GM12878 (cell line): ENCODE measurements at regions of chr3 and their contacts with region 1.

Region 1: GRCh38 chr3:136861890-136862616 is at the start of gene NCK1:
- DNase-seq: peak; percentile 90
- ATAC-seq: peak; percentile 95
- H3K4me3 ChIP-seq: peak within 1 kb of the TSS; percentile 87
- H3K27ac ChIP-seq: peak within 1 kb of the TSS; percentile 92
- H3K4me1 ChIP-seq: 0 out of 2 replicates have a peak, but pooled peaks cover 2% of the 10 kb centered on the region
- H3K27me3 ChIP-seq: no peaks in the 10 kb centered on the region
- CTCF ChIP-seq: no peak
- EP300 ChIP-seq: peak in 1 of 2 experiments; percentile 13; a peak in 1 of 4 replicates
- POLR2A ChIP-seq: peak; percentile 98
- RAD21 ChIP-seq: no peak
- polyA plus RNA-seq, gene NCK1: 18.5 to 20.4 TPM

Region 2: GRCh38 chr3:136473716-136474326 is 388.2 kb before region 1 on chr3:
- CTCF ChIA-PET with region 1: no interaction called
- POLR2A ChIA-PET with region 1: no interaction called
- RAD21 ChIA-PET with region 1: no interaction called
- SMC1A ChIA-PET with region 1: no interaction called
- in situ Hi-C with region 1: no loop called
- intact Hi-C with region 1: no loop called
- DNase-seq: no peak
- ATAC-seq: no peak
- H3K4me3 ChIP-seq: no peak overlapping the region
- H3K27ac ChIP-seq: no peak overlapping the region
- H3K4me1 ChIP-seq: no peaks in the 10 kb centered on the region
- H3K27me3 ChIP-seq: no peaks in the 10 kb centered on the region
- CTCF ChIP-seq: no peak
- EP300 ChIP-seq: no peak
- POLR2A ChIP-seq: no peak
- RAD21 ChIP-seq: no peak

Region 3: DNA sequence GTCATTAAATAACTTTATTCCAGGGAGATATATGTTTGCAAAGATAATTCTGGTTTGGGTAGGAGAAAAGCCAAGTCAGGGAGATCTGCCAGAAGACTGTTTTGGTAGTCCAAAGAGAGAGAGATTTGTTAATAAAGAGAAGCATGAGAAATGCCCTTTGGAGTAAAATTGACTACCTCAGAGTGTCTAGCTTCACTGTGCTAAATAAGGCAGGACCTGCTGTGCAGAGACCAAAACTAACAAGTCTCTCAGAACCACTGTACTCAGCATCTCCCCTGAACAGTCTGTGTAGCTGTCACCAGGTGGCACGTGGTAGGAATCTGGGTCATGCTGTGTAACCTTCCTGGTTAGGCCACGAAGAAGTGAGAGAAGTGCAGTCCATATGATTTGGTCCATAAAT is 74.7 kb before region 1 on chr3:
- CTCF ChIA-PET with region 1: no interaction called
- POLR2A ChIA-PET with region 1: no interaction called
- RAD21 ChIA-PET with region 1: interaction called, 10 read pairs
- SMC1A ChIA-PET with region 1: interaction called, 6 read pairs
- in situ Hi-C with region 1: no loop called
- intact Hi-C with region 1: no loop called
- DNase-seq: no peak
- ATAC-seq: peak; percentile 88
- H3K4me3 ChIP-seq: no peak overlapping the region
- H3K27ac ChIP-seq: no peak overlapping the region
- H3K4me1 ChIP-seq: no peaks in the 10 kb centered on the region; the same call in 1 of the 2 replicates
- H3K27me3 ChIP-seq: no peaks in the 10 kb centered on the region; a peak in 1 of 4 replicates
- CTCF ChIP-seq: no peak
- EP300 ChIP-seq: 0 out of 4 replicates have a peak, but pooled peaks of 1 of the 2 experiments have one; percentile 19
- POLR2A ChIP-seq: no peak
- RAD21 ChIP-seq: no peak

Region 4: DNA sequence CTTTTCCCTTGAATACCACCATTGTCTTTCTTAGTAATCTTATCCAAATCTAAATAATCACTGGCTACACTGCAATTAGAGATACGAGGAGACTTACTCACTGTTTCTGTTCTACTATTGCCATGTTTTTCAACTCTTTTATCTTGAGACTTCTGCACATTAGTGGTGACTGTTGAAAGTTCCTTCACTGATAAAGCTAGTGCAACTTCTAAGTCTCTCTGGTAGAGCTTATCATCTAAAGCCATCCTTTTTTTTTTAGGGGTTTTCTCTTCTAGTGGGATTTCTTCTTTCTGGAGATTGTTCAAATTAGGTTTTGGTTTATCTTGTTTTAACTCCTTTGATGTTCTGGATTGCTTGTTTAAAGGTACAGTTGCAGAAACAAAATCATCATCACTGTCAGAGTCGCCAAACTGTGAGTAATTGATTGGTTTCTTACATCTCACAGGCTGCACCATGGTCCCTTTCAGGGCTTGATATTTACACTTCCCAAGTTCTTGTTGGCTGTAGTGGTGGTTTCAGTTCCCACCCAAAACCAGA is 37.6 kb after region 1 on chr3:
- CTCF ChIA-PET with region 1: interaction called, 4 read pairs
- POLR2A ChIA-PET with region 1: no interaction called
- RAD21 ChIA-PET with region 1: interaction called, 10 read pairs
- SMC1A ChIA-PET with region 1: interaction called, 9 read pairs
- in situ Hi-C with region 1: no loop called
- intact Hi-C with region 1: no loop called
- DNase-seq: no peak
- ATAC-seq: no peak
- H3K4me3 ChIP-seq: no peak overlapping the region
- H3K27ac ChIP-seq: no peak overlapping the region
- H3K4me1 ChIP-seq: peaks cover 4% of the 10 kb centered on the region; the same call in 1 of the 2 replicates
- H3K27me3 ChIP-seq: no peaks in the 10 kb centered on the region
- CTCF ChIP-seq: no peak
- EP300 ChIP-seq: no peak
- POLR2A ChIP-seq: no peak
- RAD21 ChIP-seq: no peak

Region 5: DNA sequence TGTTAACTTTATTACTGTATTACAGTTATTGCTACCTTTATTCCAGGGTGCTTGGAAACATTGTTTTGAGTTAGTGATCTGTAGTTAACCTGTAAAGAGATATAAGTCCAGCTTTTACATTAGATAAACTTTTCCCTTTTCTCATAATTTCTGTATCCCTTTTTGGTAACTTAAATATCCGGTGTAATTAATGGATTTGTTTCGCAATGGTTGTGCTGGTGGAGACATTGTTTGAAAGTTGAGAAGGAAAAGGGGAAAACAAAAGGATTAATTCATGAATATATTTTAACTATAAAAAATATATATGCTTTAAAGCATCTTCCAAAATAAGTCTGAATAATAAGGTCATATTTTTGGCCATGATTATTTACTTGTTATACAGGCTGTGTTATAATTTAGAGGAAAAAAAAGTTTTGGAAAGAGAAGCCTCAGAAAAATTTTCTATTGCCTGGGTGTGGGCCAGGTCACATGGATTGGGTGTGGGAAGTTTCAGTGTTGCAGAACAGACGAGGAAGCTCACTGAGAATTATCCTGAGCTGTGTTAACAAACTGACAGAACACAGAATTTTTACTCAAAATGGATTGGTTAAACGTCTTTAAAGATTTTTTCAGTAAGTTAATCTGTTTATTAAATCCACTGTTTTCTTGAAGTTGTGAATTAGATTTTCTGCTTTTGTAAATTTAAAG is 68.1 kb after region 1 on chr3:
- CTCF ChIA-PET with region 1: no interaction called
- POLR2A ChIA-PET with region 1: interaction called, 5 read pairs
- RAD21 ChIA-PET with region 1: interaction called, 4 read pairs
- SMC1A ChIA-PET with region 1: interaction called, 7 read pairs
- in situ Hi-C with region 1: no loop called
- intact Hi-C with region 1: loop called (anchors 5 kb)
- DNase-seq: no peak
- ATAC-seq: no peak
- H3K4me3 ChIP-seq: no peak overlapping the region
- H3K27ac ChIP-seq: no peak overlapping the region; the same call in 1 of the 2 replicates
- H3K4me1 ChIP-seq: peaks cover 9% of the 10 kb centered on the region; the same call in 1 of the 2 replicates
- H3K27me3 ChIP-seq: no peaks in the 10 kb centered on the region
- CTCF ChIP-seq: no peak
- EP300 ChIP-seq: no peak
- POLR2A ChIP-seq: no peak
- RAD21 ChIP-seq: no peak

Region 6: DNA sequence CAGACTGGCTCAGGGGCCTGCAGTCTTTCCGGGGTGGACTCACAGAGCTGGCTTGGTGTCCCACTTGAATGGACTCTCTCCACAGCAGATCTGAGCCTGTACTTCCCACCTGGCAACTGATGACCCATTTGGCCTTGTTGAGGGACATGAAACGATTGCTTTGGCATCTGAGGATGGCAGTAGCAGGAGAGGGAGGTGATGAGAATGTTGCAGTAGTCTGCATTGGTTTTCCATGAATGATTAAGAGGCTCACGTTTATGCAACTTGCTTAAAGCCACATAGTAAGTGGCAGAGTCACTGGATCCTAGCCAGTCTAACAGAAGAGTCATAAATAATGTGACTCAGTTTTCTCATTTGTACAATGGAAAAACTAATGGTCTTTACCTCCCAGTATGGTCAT is 117.6 kb after region 1 on chr3:
- CTCF ChIA-PET with region 1: no interaction called
- POLR2A ChIA-PET with region 1: no interaction called
- RAD21 ChIA-PET with region 1: no interaction called
- SMC1A ChIA-PET with region 1: no interaction called
- in situ Hi-C with region 1: no loop called
- intact Hi-C with region 1: no loop called
- DNase-seq: no peak
- ATAC-seq: no peak
- H3K4me3 ChIP-seq: no peak overlapping the region
- H3K27ac ChIP-seq: no peak overlapping the region
- H3K4me1 ChIP-seq: no peaks in the 10 kb centered on the region
- H3K27me3 ChIP-seq: no peaks in the 10 kb centered on the region
- CTCF ChIP-seq: no peak
- EP300 ChIP-seq: no peak
- POLR2A ChIP-seq: no peak
- RAD21 ChIP-seq: no peak

Region 7: DNA sequence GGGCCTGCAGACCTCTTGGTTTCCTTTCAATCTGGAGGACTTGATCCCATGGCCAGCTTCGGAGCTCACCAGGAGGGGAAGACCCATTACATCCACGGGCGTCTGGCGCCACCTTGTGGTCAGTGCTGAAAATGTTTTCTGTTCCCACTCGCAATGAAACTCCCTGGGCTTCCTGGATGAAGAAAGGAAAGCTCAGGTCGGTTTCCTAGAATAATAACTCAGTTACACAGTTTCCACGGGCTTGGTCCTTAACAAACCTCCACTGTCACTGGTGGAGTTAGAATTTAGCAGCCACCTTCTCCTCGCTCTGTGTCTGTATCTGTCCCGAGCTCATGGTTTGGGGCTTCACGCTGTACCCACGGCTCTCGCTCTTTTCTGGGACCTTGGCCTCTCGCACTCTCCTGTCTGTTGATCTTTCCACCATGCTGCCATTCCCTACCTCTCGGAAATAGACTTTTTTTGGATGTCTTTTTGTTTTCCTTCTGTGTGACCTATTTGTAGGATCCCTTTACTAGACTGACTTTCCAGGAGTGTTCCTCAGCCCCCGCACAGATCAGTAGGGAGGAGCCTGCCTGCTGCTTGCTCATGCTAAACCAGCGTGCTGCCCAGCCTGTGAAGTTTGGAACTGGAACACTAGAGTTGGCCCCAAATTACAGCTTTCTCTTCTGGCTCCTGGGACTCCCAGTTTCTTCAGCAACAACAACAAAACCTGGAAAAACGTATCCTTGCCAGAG is 152.1 kb after region 1 on chr3:
- CTCF ChIA-PET with region 1: interaction called, 14 read pairs
- POLR2A ChIA-PET with region 1: interaction called, 7 read pairs
- RAD21 ChIA-PET with region 1: interaction called, 13 read pairs
- SMC1A ChIA-PET with region 1: interaction called, 17 read pairs
- in situ Hi-C with region 1: no loop called
- intact Hi-C with region 1: loop called (anchors 5 kb)
- DNase-seq: peak; percentile 51
- ATAC-seq: peak; percentile 93
- H3K4me3 ChIP-seq: peak overlapping the region; percentile 65
- H3K27ac ChIP-seq: peak overlapping the region; percentile 48
- H3K4me1 ChIP-seq: 0 out of 2 replicates have a peak, but pooled peaks cover 4% of the 10 kb centered on the region
- H3K27me3 ChIP-seq: no peaks in the 10 kb centered on the region
- CTCF ChIP-seq: peak; percentile 78 to 92 (median 78)
- EP300 ChIP-seq: 0 out of 4 replicates have a peak, but pooled peaks of 1 of the 2 experiments have one; percentile 9
- POLR2A ChIP-seq: no peak
- RAD21 ChIP-seq: peak; percentile 99